ENCODE measurements at regions of chr2 and their contacts with region 1.

Region 1: DNA sequence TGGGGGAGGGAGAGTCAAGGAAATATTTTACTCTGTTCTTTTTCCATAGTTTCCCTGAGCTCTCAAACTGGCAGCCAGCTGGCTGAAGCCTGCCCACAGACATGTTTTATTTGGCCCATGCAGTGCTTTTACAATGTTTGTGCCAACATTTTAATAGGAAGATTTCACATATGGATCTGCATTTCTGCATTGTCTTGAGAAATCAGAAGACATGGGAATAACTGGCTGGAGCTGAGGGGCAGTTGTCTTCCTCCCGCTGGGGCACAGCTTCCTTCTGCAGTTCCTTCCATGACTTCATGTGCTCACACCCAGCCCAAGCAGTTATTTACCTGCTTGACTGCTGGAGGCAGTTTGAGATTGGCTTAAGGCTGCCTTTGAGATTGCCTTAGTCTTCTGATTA is 74.4 kb downstream of the PLCL1 start:
- DNase-seq: no peak
- ATAC-seq: peak in 1 of 4 donors; percentile 27
- H3K4me3 ChIP-seq: no peak overlapping the region
- H3K27ac ChIP-seq: peak overlapping the region in 6 of 12 donors; percentile 13 to 43 (median 20)
- H3K4me1 ChIP-seq: peaks cover 0 to 76% (median 36%) of the 10 kb centered on the region in 12 donors
- H3K27me3 ChIP-seq: no peaks in the 10 kb centered on the region
- CTCF ChIP-seq: no peak
- POLR2A ChIP-seq: no peak

Region 2: GRCh38 chr2:197838036-197838435 is 40.8 kb before region 1 on chr2:
- intact Hi-C with region 1: loop called in 1 of 10 experiments (anchors 5 kb)
- DNase-seq: no peak
- ATAC-seq: peak in 3 of 4 donors; percentile 78 to 86 (median 80)
- H3K4me3 ChIP-seq: peak overlapping the region in 9 of 12 donors; percentile 15 to 40 (median 33)
- H3K27ac ChIP-seq: peak overlapping the region; percentile 21 to 77 (median 45)
- H3K4me1 ChIP-seq: peaks cover 0 to 41% (median 19%) of the 10 kb centered on the region in 12 donors
- H3K27me3 ChIP-seq: no peaks in the 10 kb centered on the region
- CTCF ChIP-seq: no peak
- POLR2A ChIP-seq: no peak

Region 3: GRCh38 chr2:197958592-197959150 is 79.9 kb after region 1 on chr2:
- intact Hi-C with region 1: loop called in 3 of 10 experiments (anchors 5 to 10 kb)
- DNase-seq: no peak
- ATAC-seq: peak; percentile 94 to 98 (median 96)
- H3K4me3 ChIP-seq: no peak overlapping the region
- H3K27ac ChIP-seq: peak overlapping the region in 9 of 12 donors; percentile 20 to 74 (median 44)
- H3K4me1 ChIP-seq: peaks cover 0 to 55% (median 17%) of the 10 kb centered on the region in 12 donors
- H3K27me3 ChIP-seq: no peaks in the 10 kb centered on the region
- CTCF ChIP-seq: no peak
- POLR2A ChIP-seq: no peak

Measured in heart left ventricle (tissue), 16 donors.